ENCODE measurements at regions of chr11 and their contacts with region 1.

Region 1: DNA sequence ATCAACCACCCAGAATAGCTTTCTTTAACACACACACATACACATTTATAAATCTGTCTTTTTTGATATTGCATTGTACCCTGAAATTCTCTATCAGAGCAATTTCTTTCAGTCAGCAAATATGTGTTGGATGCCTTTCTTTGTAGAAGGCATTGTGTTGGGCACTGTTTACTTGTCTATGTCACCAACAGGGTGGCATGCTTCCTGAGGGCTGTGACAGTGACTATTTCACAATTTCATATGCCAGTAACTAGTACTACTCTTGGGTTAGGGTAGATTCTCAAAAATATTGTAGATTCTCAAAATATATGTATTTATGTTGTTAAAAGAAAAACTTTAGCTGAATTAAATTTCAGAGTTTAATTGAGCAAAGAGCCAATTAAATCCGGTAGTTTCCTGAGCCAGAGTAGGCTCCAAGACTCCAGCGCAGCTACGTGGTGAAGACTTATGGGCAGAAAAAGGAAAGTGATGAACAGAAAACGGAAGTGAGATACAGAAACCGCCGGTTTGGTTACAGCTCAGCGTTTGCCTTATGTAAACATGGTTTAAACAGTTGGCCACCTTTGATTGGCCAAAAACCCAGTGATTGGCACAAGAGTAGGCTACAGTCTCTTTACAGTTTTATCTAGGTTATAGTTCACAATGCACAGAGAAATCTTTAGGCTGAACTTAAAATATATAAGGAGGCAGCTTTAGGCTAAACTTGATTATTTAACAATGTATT is 723.3 kb downstream of the NTM start:
- DNase-seq: no peak
- ATAC-seq: no peak
- H3K4me3 ChIP-seq: no peak overlapping the region
- H3K4me3 Mint-ChIP-seq: no peak overlapping the region
- H3K27ac ChIP-seq: no peak overlapping the region
- H3K27ac Mint-ChIP-seq: no peak overlapping the region
- H3K4me1 ChIP-seq: no peaks in the 10 kb centered on the region
- H3K4me1 Mint-ChIP-seq: no peaks in the 10 kb centered on the region
- H3K27me3 ChIP-seq: no peaks in the 10 kb centered on the region
- H3K27me3 Mint-ChIP-seq: no peaks in the 10 kb centered on the region

Region 2: DNA sequence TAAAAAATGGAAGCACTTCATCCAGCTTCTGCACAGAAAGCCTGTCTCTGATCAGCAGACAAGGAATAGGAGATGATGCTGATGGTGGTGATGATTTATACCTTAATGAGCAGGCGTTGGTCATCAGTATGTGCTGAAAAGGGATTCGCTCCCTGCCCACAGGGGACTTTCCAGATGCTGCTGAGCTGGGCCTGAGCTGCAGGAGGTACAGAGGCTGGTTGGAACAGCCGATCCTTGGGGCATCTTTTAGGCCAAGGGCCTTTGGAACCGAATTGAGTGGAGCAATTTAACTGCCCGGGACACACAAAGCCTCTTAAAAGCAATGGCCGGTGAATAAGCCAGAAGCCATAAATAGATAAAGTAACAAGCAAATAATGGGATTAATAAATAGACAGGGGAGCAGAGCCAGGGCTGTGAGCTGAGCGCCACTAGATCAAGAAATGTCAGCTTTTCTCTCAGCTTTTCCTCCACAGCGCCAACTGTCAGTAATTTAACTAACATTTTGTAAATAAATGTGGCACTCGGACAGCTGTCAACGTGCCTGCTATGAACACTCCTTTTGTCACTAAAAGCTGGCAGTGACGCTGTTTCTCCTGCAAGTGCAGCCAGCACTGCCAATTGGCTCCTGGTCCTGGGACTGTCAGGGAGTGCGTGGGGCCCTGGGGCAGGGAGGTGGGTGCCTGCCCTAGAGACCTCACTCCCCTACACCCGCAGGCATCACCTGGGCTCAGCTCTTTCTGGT is 160.9 kb before region 1 on chr11:
- CTCF ChIA-PET with region 1: no interaction called
- POLR2A ChIA-PET with region 1: no interaction called
- intact Hi-C with region 1: loop called in 1 of 2 experiments (anchors 5 kb)
- DNase-seq: no peak
- ATAC-seq: no peak
- H3K4me3 ChIP-seq: no peak overlapping the region
- H3K4me3 Mint-ChIP-seq: no peak overlapping the region
- H3K27ac ChIP-seq: no peak overlapping the region
- H3K27ac Mint-ChIP-seq: no peak overlapping the region
- H3K4me1 ChIP-seq: no peaks in the 10 kb centered on the region
- H3K4me1 Mint-ChIP-seq: no peaks in the 10 kb centered on the region
- H3K27me3 ChIP-seq: no peaks in the 10 kb centered on the region
- H3K27me3 Mint-ChIP-seq: peaks cover 0 to 8% (median 0%) of the 10 kb centered on the region in 5 donors

Region 3: GRCh38 chr11:132080127-132080526 is 13.6 kb before region 1 on chr11:
- CTCF ChIA-PET with region 1: no interaction called
- POLR2A ChIA-PET with region 1: no interaction called
- intact Hi-C with region 1: no loop called
- DNase-seq: no peak
- ATAC-seq: no peak
- H3K4me3 ChIP-seq: no peak overlapping the region
- H3K4me3 Mint-ChIP-seq: no peak overlapping the region
- H3K27ac ChIP-seq: no peak overlapping the region
- H3K27ac Mint-ChIP-seq: no peak overlapping the region
- H3K4me1 ChIP-seq: no peaks in the 10 kb centered on the region
- H3K4me1 Mint-ChIP-seq: no peaks in the 10 kb centered on the region
- H3K27me3 ChIP-seq: no peaks in the 10 kb centered on the region
- H3K27me3 Mint-ChIP-seq: no peaks in the 10 kb centered on the region

Measured in naive thymus-derived CD4-positive, alpha-beta T cell (primary cell).